ENCODE measurements at regions of chr20 and their contacts with region 1.

Region 1: GRCh38 chr20:53594068-53595017 is 704 bp upstream of the ZNF217 start:
- DNase-seq: peak; percentile 93 to 100 (median 96)
- ATAC-seq: peak; percentile 90
- H3K4me3 ChIP-seq: peak overlapping the region; percentile 81
- H3K4me3 Mint-ChIP-seq: peak overlapping the region; percentile 89 to 99 (median 92)
- H3K27ac ChIP-seq: peak overlapping the region; percentile 97
- H3K27ac Mint-ChIP-seq: peak overlapping the region; percentile 90 to 98 (median 97)
- H3K4me1 ChIP-seq: peaks cover 14 to 21% of the 10 kb centered on the region in 2 donors
- H3K4me1 Mint-ChIP-seq: peaks cover 23 to 66% (median 54%) of the 10 kb centered on the region in 7 donors
- H3K27me3 ChIP-seq: no peaks in the 10 kb centered on the region
- H3K27me3 Mint-ChIP-seq: no peaks in the 10 kb centered on the region

Region 2: DNA sequence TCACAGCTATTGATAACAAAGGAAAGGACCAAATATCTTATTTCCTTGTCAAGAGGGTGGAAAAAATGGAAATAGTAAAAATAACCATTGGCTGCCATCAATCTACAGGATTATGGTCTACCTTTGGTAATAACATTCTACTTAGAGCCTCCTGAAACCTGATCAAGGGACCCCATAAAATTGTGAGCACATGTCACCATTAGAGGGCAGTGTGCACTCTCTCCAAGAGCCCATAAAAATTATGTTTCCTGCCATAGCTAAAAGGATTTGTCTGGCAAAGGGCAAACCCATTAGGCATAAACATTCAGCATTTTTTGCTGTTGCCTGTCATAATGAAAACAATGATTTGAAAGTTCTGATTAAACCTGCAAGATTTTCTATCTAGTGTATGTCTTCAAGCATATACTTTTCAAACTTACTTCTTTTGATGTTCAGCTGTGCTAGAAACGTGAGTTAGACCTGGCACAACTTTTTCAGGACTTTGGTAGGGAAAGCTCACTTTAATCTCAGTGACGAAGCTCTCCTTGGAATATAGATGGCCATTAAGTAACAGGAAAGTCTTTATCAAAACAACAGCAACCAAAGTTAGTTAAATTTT is 1282.1 kb before region 1 on chr20:
- CTCF ChIA-PET with region 1: no interaction called
- POLR2A ChIA-PET with region 1: no interaction called
- intact Hi-C with region 1: no loop called
- DNase-seq: peak in 8 of 9 donors; percentile 35 to 76 (median 70)
- ATAC-seq: peak; percentile 85
- H3K4me3 ChIP-seq: no peak overlapping the region
- H3K4me3 Mint-ChIP-seq: peak overlapping the region in 2 of 10 donors; percentile 32 to 41
- H3K27ac ChIP-seq: no peak overlapping the region
- H3K27ac Mint-ChIP-seq: peak overlapping the region in 4 of 9 donors; percentile 21 to 57 (median 38)
- H3K4me1 ChIP-seq: peaks cover 0 to 8% of the 10 kb centered on the region in 2 donors
- H3K4me1 Mint-ChIP-seq: peaks cover 7 to 57% (median 40%) of the 10 kb centered on the region in 7 donors
- H3K27me3 ChIP-seq: no peaks in the 10 kb centered on the region
- H3K27me3 Mint-ChIP-seq: peaks cover 0 to 7% (median 0%) of the 10 kb centered on the region in 5 donors

Region 3: GRCh38 chr20:53643031-53643832 is 48.9 kb after region 1 on chr20:
- CTCF ChIA-PET with region 1: interaction called, 6 read pairs
- POLR2A ChIA-PET with region 1: interaction called, 60 read pairs
- intact Hi-C with region 1: loop called (anchors 1 kb)
- DNase-seq: peak in 8 of 9 donors; percentile 61 to 81 (median 75)
- ATAC-seq: peak; percentile 98
- H3K4me3 ChIP-seq: peak overlapping the region; percentile 56
- H3K4me3 Mint-ChIP-seq: peak overlapping the region; percentile 73 to 92 (median 85)
- H3K27ac ChIP-seq: peak overlapping the region; percentile 77
- H3K27ac Mint-ChIP-seq: peak overlapping the region; percentile 90 to 100 (median 97)
- H3K4me1 ChIP-seq: peaks cover 13 to 45% of the 10 kb centered on the region in 2 donors
- H3K4me1 Mint-ChIP-seq: peaks cover 30 to 64% (median 52%) of the 10 kb centered on the region in 7 donors
- H3K27me3 ChIP-seq: no peaks in the 10 kb centered on the region
- H3K27me3 Mint-ChIP-seq: no peaks in the 10 kb centered on the region

Region 4: GRCh38 chr20:53652090-53652858 is 57.9 kb after region 1 on chr20:
- CTCF ChIA-PET with region 1: no interaction called
- POLR2A ChIA-PET with region 1: interaction called, 60 read pairs
- intact Hi-C with region 1: loop called (anchors 1 to 2 kb)
- DNase-seq: peak in 7 of 9 donors; percentile 34 to 61 (median 46)
- ATAC-seq: peak; percentile 85
- H3K4me3 ChIP-seq: peak overlapping the region; percentile 22
- H3K4me3 Mint-ChIP-seq: peak overlapping the region; percentile 25 to 86 (median 73)
- H3K27ac ChIP-seq: peak overlapping the region; percentile 72
- H3K27ac Mint-ChIP-seq: peak overlapping the region; percentile 88 to 97 (median 95)
- H3K4me1 ChIP-seq: peaks cover 21 to 32% of the 10 kb centered on the region in 2 donors
- H3K4me1 Mint-ChIP-seq: peaks cover 23 to 50% (median 43%) of the 10 kb centered on the region in 7 donors
- H3K27me3 ChIP-seq: no peaks in the 10 kb centered on the region
- H3K27me3 Mint-ChIP-seq: no peaks in the 10 kb centered on the region

Region 5: DNA sequence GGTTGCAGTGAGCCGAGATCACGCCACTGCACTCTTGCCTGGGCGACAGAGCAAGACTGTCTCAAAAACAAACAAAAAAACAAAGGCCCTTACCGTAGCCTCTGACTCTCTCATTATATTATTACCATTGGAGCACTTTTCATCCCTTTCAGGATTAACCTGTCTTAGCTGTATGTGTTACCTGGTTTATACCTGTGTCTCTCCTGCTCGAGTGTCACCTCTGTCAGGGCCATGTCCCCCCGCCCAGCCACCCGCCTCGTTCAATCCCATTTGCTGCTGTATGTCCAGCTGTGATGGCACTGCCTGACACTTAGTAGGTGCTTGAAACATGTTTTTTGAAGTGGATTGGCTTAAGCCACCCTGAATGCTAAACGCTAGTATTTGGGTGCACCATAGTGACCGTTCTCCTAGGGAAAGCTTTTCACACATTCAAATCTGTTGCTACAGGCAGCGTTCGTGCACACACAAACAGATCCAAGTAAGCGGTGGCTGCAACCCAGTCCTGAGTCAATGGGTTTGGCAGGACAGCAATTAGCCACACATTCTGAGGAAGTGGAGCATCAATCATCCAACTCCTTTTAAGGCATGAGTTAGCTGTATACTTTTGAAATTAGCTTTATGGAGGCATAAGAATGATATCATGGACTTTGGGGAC is 98.2 kb after region 1 on chr20:
- CTCF ChIA-PET with region 1: no interaction called
- POLR2A ChIA-PET with region 1: interaction called, 5 read pairs
- intact Hi-C with region 1: loop called in 1 of 2 experiments (anchors 5 kb)
- DNase-seq: no peak
- ATAC-seq: peak; percentile 61
- H3K4me3 ChIP-seq: no peak overlapping the region
- H3K4me3 Mint-ChIP-seq: peak overlapping the region; percentile 42 to 80 (median 72)
- H3K27ac ChIP-seq: no peak overlapping the region
- H3K27ac Mint-ChIP-seq: peak overlapping the region; percentile 38 to 92 (median 69)
- H3K4me1 ChIP-seq: peaks cover 8 to 10% of the 10 kb centered on the region in 2 donors
- H3K4me1 Mint-ChIP-seq: peaks cover 8 to 45% (median 30%) of the 10 kb centered on the region in 7 donors
- H3K27me3 ChIP-seq: no peaks in the 10 kb centered on the region
- H3K27me3 Mint-ChIP-seq: no peaks in the 10 kb centered on the region

Region 6: DNA sequence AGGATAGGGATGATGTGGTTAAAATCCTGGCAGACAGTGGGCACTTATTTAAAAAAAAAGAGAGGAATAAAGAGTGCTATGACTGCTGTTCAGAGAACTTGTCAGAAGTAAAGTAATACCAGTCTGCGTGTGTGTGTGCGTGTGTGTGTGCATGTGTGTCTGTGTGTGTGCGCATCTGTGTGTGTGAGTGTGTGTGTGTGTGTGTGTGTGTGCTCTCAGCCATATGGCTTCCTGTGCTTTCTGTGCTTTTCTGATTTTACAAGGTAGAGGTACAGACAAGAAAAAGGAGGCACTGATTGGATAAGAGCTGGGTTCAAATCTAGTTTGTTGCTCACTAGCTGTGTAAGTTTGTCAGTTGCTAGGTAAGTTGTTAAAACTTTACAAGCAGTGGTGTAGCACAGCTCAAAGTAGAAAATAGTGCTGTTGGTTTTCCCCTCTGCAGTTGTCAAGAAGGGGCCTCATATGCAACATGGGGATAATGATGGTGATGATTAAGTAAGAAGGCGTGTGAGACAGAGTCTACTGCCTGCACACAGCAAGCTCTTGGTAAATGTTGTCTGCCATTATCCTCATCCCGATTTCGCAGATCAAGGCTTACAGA is 154.6 kb after region 1 on chr20:
- CTCF ChIA-PET with region 1: no interaction called
- POLR2A ChIA-PET with region 1: no interaction called
- intact Hi-C with region 1: no loop called
- DNase-seq: peak in 3 of 9 donors; percentile 43 to 46 (median 44)
- ATAC-seq: peak; percentile 45
- H3K4me3 ChIP-seq: no peak overlapping the region
- H3K4me3 Mint-ChIP-seq: peak overlapping the region in 5 of 10 donors; percentile 6 to 48 (median 34)
- H3K27ac ChIP-seq: no peak overlapping the region
- H3K27ac Mint-ChIP-seq: peak overlapping the region; percentile 70 to 96 (median 84)
- H3K4me1 ChIP-seq: peaks cover 33 to 45% of the 10 kb centered on the region in 2 donors
- H3K4me1 Mint-ChIP-seq: peaks cover 33 to 66% (median 55%) of the 10 kb centered on the region in 7 donors
- H3K27me3 ChIP-seq: no peaks in the 10 kb centered on the region
- H3K27me3 Mint-ChIP-seq: no peaks in the 10 kb centered on the region

Region 7: GRCh38 chr20:54234991-54235658 is 640.8 kb after region 1 on chr20:
- CTCF ChIA-PET with region 1: no interaction called
- POLR2A ChIA-PET with region 1: no interaction called
- intact Hi-C with region 1: no loop called
- DNase-seq: no peak
- ATAC-seq: no peak
- H3K4me3 ChIP-seq: no peak overlapping the region
- H3K4me3 Mint-ChIP-seq: no peak overlapping the region
- H3K27ac ChIP-seq: no peak overlapping the region
- H3K27ac Mint-ChIP-seq: no peak overlapping the region
- H3K4me1 ChIP-seq: no peaks in the 10 kb centered on the region
- H3K4me1 Mint-ChIP-seq: peaks cover 0 to 2% (median 0%) of the 10 kb centered on the region in 7 donors
- H3K27me3 ChIP-seq: no peaks in the 10 kb centered on the region
- H3K27me3 Mint-ChIP-seq: peaks cover 3 to 58% (median 47%) of the 10 kb centered on the region in 5 donors